ENCODE measurements at regions of chr1 and their contacts with region 1.

Region 1: GRCh38 chr1:109397538-109398342 is at the start of gene SORT1:
- DNase-seq: peak; percentile 90
- ATAC-seq: peak; percentile 93
- H3K4me3 ChIP-seq: peak within 1 kb of the TSS; percentile 73 to 94 (median 75)
- H3K27ac ChIP-seq: peak within 1 kb of the TSS; percentile 61
- H3K4me1 ChIP-seq: peaks cover 49% of the 10 kb centered on the region
- H3K27me3 ChIP-seq: no peaks in the 10 kb centered on the region; a peak in 1 of 5 replicates
- CTCF ChIP-seq: peak; percentile 55
- EP300 ChIP-seq: no peak
- POLR2A ChIP-seq: peak; percentile 27 to 77; a peak in 3 of 4 replicates
- RAD21 ChIP-seq: peak; percentile 78
- total RNA-seq, gene SORT1: 32.4 and 35.3 TPM in 2 replicates

Region 2: GRCh38 chr1:109239580-109240095 is 158.1 kb before region 1 on chr1:
- CTCF ChIA-PET with region 1: interaction called, 4 read pairs
- POLR2A ChIA-PET with region 1: interaction called, 11 read pairs
- in situ Hi-C with region 1: no loop called
- intact Hi-C with region 1: no loop called
- DNase-seq: peak; percentile 66
- ATAC-seq: peak; percentile 94
- H3K4me3 ChIP-seq: no peak overlapping the region
- H3K27ac ChIP-seq: peak overlapping the region; percentile 20
- H3K4me1 ChIP-seq: peaks cover 38% of the 10 kb centered on the region
- H3K27me3 ChIP-seq: 0 out of 5 replicates have a peak, but pooled peaks cover 0 to 3% of the 10 kb centered on the region in 2 experiments
- CTCF ChIP-seq: peak; percentile 83
- EP300 ChIP-seq: no peak
- POLR2A ChIP-seq: no peak
- RAD21 ChIP-seq: peak; percentile 63

Region 3: DNA sequence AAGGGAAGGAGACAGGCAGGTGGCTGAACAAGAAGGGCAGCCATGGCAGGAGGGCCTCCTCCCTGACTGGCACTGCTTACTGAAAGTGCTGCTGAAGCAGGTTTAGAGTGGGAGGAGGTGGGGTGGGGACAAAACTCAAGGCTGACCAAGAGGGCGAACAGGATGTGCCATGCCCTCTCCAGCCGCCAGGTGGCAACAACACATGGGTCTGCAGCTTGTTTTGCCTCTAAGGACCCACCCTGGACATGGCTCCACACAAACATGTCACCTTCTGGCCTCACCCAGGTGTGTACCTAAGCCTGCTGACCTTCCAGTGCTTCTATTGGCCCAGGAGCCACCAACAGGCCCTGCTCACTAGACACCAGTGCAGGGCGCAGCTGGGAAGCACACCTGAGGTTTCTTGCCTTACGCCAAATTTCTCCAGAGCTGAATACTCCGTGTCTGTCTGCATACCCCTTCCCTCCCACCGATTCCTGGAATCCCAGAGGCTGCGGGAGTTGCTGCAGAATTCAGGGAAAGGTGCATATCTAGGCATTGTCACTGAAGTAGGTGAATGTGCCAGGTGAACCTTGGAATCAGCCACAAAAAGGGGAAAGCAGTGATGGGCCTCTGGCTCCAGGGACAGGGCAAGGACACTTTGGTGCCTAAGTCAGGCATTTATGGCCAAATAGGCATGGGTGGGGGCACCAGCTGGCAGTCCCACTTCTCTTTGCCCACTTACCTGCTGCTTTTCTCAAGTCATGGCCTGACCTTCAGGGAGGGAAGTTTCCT is 120.1 kb before region 1 on chr1:
- CTCF ChIA-PET with region 1: interaction called, 18 read pairs
- POLR2A ChIA-PET with region 1: interaction called, 25 read pairs
- in situ Hi-C with region 1: no loop called
- intact Hi-C with region 1: loop called (anchors 1 kb)
- DNase-seq: peak; percentile 86
- ATAC-seq: peak; percentile 70
- H3K4me3 ChIP-seq: peak overlapping the region in 1 of 3 experiments; percentile 19; a peak in 1 of 6 replicates
- H3K27ac ChIP-seq: peak overlapping the region; percentile 66
- H3K4me1 ChIP-seq: peaks cover 88% of the 10 kb centered on the region
- H3K27me3 ChIP-seq: no peaks in the 10 kb centered on the region; a peak in 1 of 5 replicates
- CTCF ChIP-seq: peak; percentile 99
- EP300 ChIP-seq: peak in 1 of 2 experiments; percentile 30; a peak in 1 of 4 replicates
- POLR2A ChIP-seq: peak; percentile 20 to 66; a peak in 3 of 4 replicates
- RAD21 ChIP-seq: peak; percentile 93

Region 4: DNA sequence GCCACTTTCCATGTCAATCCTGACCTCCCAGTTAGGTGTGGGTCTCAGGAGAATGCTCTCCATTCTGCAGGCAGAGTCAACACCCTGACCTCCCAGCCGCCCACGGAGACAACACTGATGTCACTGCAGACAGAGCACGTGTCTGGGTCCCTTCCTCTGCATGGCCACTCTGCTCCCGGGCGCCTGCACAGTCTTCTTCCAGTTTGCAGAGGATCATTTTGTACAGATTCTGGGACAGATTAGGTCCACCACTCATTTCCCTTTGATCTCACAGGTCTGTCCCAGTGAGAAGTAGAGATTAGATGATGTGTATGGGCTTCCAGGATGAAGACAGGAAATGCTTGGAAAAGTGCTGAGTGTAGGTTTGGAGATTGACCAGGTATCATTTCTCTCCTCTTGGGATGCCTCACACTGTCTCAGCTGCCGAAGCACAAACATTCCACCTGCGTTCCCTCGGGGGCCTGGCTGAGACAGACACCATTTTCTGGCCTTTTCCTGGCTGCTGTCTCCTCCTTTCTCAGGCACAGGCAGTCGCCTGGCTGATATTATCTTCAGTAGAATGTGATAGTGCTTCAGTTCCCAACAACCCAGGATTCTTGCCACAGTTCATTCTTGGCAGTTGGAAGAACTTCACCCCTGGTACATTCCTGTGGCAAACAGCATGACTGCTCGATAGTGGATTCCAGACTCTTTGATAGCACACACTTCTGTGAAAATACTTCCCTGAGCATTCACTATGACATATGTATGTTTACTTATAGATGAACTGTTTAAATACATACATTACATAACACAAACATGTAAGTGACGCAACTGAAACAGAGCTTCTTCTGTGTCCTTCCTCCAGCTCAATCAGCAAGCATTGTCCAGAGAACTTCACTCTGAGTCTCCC is 98.8 kb before region 1 on chr1:
- CTCF ChIA-PET with region 1: no interaction called
- POLR2A ChIA-PET with region 1: interaction called, 22 read pairs
- in situ Hi-C with region 1: no loop called
- intact Hi-C with region 1: no loop called
- DNase-seq: peak; percentile 98
- ATAC-seq: peak; percentile 85
- H3K4me3 ChIP-seq: peak overlapping the region in 2 of 3 experiments; percentile 6 to 65; a peak in 1 of 6 replicates
- H3K27ac ChIP-seq: peak overlapping the region; percentile 96
- H3K4me1 ChIP-seq: peaks cover 51% of the 10 kb centered on the region
- H3K27me3 ChIP-seq: no peaks in the 10 kb centered on the region
- CTCF ChIP-seq: no peak
- EP300 ChIP-seq: peak; percentile 90 to 94
- POLR2A ChIP-seq: peak in 1 of 2 experiments; percentile 48; a peak in 1 of 4 replicates
- RAD21 ChIP-seq: no peak; the same call in 1 of the 2 replicates

Region 5: DNA sequence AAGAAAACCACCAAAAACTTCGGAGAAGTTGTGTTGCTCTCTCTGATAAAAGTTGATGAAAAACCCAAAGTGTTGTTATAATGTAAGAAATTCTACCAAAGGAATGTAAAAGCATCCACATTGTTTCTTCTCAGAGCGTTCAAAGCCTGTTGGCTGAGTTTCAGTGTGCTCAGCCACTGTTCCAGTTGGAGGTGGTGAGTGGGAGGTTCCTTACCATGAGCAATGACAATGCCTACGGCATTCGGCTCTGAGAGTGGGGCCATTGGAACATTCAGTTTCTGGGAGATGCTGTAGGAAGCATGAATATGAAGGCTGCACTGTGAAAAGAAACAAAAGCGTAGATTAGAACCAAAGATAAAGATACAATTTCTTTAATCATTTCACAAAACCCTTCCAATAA is 70.5 kb before region 1 on chr1:
- CTCF ChIA-PET with region 1: no interaction called
- POLR2A ChIA-PET with region 1: no interaction called
- in situ Hi-C with region 1: no loop called
- intact Hi-C with region 1: no loop called
- DNase-seq: no peak
- ATAC-seq: no peak
- H3K4me3 ChIP-seq: no peak overlapping the region
- H3K27ac ChIP-seq: no peak overlapping the region
- H3K4me1 ChIP-seq: no peaks in the 10 kb centered on the region
- H3K27me3 ChIP-seq: no peaks in the 10 kb centered on the region
- CTCF ChIP-seq: no peak
- EP300 ChIP-seq: no peak
- POLR2A ChIP-seq: no peak
- RAD21 ChIP-seq: no peak

Region 6: DNA sequence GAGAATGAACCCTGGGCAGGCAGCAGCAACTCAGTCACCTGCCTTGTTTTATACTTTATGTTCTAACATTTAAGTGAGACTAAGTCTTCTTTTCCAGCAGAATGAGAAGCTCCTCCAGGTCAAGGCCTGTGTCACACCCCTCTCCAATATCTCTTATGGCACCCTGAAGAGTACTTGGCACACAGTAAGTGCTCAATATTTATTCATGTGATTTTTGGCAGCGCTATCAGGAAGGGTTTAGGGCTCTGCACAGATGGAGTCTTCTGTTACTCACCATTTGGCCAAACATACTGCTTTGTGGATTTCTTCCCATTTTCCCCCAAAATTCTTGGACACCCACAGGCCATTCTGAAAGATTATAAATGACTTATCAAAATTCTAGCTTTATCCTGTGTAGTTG is 47.1 kb before region 1 on chr1:
- CTCF ChIA-PET with region 1: no interaction called
- POLR2A ChIA-PET with region 1: interaction called, 3 read pairs
- in situ Hi-C with region 1: no loop called
- intact Hi-C with region 1: loop called (anchors 5 kb)
- DNase-seq: no peak
- ATAC-seq: no peak
- H3K4me3 ChIP-seq: no peak overlapping the region
- H3K27ac ChIP-seq: no peak overlapping the region
- H3K4me1 ChIP-seq: peaks cover 30% of the 10 kb centered on the region
- H3K27me3 ChIP-seq: no peaks in the 10 kb centered on the region
- CTCF ChIP-seq: no peak
- EP300 ChIP-seq: no peak
- POLR2A ChIP-seq: no peak
- RAD21 ChIP-seq: no peak

Region 7: DNA sequence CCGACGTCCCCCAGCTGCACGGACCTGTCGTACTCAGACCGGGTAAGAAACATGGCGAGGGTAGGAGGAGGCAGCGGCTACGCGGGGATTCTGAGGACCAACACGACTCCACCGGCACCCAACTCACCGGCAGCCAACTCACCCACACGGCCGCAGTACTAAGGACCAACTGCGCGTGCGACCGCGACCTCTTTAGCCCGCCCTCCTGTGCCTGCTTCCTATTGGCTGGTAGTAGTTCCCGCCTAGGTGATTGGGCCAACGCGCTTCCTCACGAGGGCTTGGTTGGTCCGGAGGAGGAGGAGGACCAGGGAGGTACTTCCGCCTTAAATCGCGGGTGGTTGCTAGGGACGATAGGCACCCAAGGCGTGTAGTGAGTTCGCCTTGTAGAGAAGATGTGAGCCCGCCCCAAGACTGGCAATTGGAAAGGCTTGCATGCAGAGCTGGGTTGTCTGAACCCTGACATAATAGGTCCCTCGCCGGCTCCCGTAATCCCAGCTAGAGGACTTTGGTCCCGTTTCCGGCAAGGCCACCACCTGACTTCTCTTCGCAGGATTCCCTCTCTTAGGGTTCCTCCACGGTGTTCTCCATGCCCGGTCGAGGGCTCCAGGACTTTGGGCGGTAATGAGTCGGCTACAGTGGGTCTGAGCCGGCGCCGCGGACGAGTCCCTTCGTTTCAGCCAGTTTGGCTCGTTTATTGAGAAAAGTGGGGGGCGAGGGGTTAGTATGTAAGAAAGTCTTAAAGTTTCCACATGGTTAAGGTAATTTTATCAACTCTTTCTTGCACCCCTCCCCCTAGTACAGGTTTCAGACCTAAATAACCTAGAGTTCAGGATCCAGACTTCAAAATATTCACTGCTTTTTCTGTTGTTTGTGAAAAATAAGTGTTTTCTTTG is 28.8 kb after region 1 on chr1 and contains the start of gene PSMA5:
- CTCF ChIA-PET with region 1: no interaction called
- POLR2A ChIA-PET with region 1: interaction called, 12 read pairs
- in situ Hi-C with region 1: no loop called
- intact Hi-C with region 1: no loop called
- DNase-seq: peak; percentile 99
- ATAC-seq: peak; percentile 97
- H3K4me3 ChIP-seq: peak within 1 kb of the TSS; percentile 84 to 90 (median 84)
- H3K27ac ChIP-seq: peak within 1 kb of the TSS; percentile 93
- H3K4me1 ChIP-seq: peaks cover 45% of the 10 kb centered on the region
- H3K27me3 ChIP-seq: no peaks in the 10 kb centered on the region; a peak in 1 of 5 replicates
- CTCF ChIP-seq: 0 out of 2 replicates have a peak, but pooled peaks have one; percentile 2
- EP300 ChIP-seq: no peak; a peak in 1 of 4 replicates
- POLR2A ChIP-seq: peak; percentile 97
- RAD21 ChIP-seq: peak; percentile 60
- total RNA-seq, gene PSMA5: 169 and 261 TPM in 2 replicates

Region 8: GRCh38 chr1:109548321-109549267 is 150.9 kb after region 1 on chr1 and contains the start of gene GNAI3:
- CTCF ChIA-PET with region 1: no interaction called
- POLR2A ChIA-PET with region 1: no interaction called
- in situ Hi-C with region 1: no loop called
- intact Hi-C with region 1: no loop called
- DNase-seq: peak; percentile 94
- ATAC-seq: peak; percentile 98
- H3K4me3 ChIP-seq: peak within 1 kb of the TSS; percentile 83 to 96 (median 93)
- H3K27ac ChIP-seq: peak within 1 kb of the TSS; percentile 72
- H3K4me1 ChIP-seq: peaks cover 61% of the 10 kb centered on the region
- H3K27me3 ChIP-seq: no peaks in the 10 kb centered on the region; a peak in 2 of 5 replicates
- CTCF ChIP-seq: peak; percentile 17; the same call in 1 of the 2 replicates
- EP300 ChIP-seq: 0 out of 4 replicates have a peak, but pooled peaks of 1 of the 2 experiments have one; percentile 30
- POLR2A ChIP-seq: peak; percentile 94 to 96
- RAD21 ChIP-seq: no peak
- total RNA-seq, gene GNAI3: 9.0 and 11.0 TPM in 2 replicates

Measured in HepG2 (cell line).